GM12878 (cell line): ENCODE measurements at regions of chr12 and their contacts with region 1.

Region 1: GRCh38 chr12:121060149-121061001 is 21.3 kb upstream of the OASL start:
- DNase-seq: peak; percentile 56
- ATAC-seq: peak; percentile 96
- H3K4me3 ChIP-seq: peak overlapping the region; percentile 43
- H3K27ac ChIP-seq: peak overlapping the region; percentile 96
- H3K4me1 ChIP-seq: peaks cover 10% of the 10 kb centered on the region
- H3K27me3 ChIP-seq: no peaks in the 10 kb centered on the region
- CTCF ChIP-seq: peak; percentile 50 to 66 (median 56); a peak in 5 of 6 replicates
- EP300 ChIP-seq: no peak
- POLR2A ChIP-seq: peak; percentile 63
- RAD21 ChIP-seq: peak; percentile 69

Region 2: DNA sequence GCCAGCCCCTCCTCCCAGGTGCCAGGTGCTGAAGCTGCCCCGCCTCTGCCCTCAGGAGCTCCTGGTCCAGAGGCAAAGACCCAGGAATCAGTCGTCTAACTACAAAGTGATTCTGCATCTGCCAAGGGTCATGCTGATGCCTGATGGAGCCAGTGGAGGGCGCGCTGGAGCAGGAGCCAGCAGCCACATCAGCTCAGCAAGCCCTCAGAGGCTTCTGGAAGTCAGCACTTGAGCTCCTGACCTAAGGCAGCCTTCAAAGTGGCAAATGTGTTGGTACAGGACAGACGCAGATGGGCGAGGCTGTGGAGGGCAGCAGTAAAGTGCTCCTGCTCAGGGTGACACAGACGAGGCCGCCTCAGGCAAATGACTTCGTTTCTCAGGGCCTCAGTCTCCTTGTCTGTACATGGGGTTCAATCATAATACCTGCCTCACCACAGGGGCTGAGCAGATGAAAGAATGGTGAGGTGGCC is 55.0 kb before region 1 on chr12:
- CTCF ChIA-PET with region 1: interaction called, 28 read pairs
- POLR2A ChIA-PET with region 1: interaction called, 9 read pairs
- RAD21 ChIA-PET with region 1: interaction called, 24 read pairs
- SMC1A ChIA-PET with region 1: interaction called, 10 read pairs
- in situ Hi-C with region 1: no loop called
- intact Hi-C with region 1: no loop called
- DNase-seq: no peak
- ATAC-seq: peak; percentile 87
- H3K4me3 ChIP-seq: no peak overlapping the region
- H3K27ac ChIP-seq: no peak overlapping the region
- H3K4me1 ChIP-seq: no peaks in the 10 kb centered on the region
- H3K27me3 ChIP-seq: no peaks in the 10 kb centered on the region
- CTCF ChIP-seq: peak; percentile 63 to 77 (median 73)
- EP300 ChIP-seq: no peak
- POLR2A ChIP-seq: no peak
- RAD21 ChIP-seq: peak; percentile 53

Region 3: DNA sequence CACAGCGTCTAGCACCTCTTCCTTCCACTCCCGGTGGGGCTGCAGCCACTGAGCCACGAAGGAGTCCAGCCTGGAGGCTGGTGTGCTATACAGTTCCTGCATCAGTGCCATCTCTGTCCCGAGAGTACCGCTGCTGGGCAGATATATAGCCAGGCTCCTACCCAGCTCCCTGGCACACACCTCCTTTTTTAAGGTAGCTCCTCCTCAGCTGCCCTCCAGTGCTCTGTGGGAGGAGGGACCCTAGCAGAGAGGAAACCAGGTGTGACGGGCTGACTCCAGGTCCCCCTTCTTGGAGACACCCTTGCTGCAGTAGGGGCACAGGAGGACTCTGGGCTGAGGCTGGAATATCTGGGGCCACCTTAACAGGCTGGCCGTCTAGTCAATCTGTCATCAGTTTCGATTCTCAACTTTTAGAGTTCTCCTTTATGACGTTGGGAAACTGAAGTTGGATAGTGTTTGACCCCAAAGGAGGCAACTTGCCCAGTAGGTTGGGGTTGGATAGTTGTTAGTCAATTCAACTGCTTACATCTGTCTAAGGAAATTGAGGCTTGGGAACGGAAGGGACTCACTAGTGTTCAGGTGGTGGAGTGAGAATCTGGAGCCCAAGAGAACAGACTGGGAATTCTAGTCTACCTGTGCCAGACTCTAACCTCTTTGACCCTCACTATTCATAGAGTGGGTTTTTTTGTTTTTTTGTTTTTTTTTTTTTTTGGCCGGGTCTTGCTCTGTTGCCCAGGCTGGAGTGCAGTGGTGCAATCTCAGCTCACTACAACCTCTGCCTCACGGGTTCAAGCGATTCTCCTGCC is 21.3 kb before region 1 on chr12 and contains the start of gene OASL:
- CTCF ChIA-PET with region 1: interaction called, 18 read pairs
- POLR2A ChIA-PET with region 1: interaction called, 7 read pairs
- RAD21 ChIA-PET with region 1: interaction called, 6 read pairs
- SMC1A ChIA-PET with region 1: interaction called, 8 read pairs
- in situ Hi-C with region 1: no loop called
- intact Hi-C with region 1: no loop called
- DNase-seq: peak; percentile 63
- ATAC-seq: peak; percentile 94
- H3K4me3 ChIP-seq: peak within 1 kb of the TSS; percentile 70
- H3K27ac ChIP-seq: peak within 1 kb of the TSS; percentile 87
- H3K4me1 ChIP-seq: peaks cover 16% of the 10 kb centered on the region
- H3K27me3 ChIP-seq: no peaks in the 10 kb centered on the region
- CTCF ChIP-seq: no peak
- EP300 ChIP-seq: no peak
- POLR2A ChIP-seq: peak; percentile 90
- RAD21 ChIP-seq: no peak
- polyA plus RNA-seq, gene OASL: 2.5 to 2.7 TPM

Region 4: DNA sequence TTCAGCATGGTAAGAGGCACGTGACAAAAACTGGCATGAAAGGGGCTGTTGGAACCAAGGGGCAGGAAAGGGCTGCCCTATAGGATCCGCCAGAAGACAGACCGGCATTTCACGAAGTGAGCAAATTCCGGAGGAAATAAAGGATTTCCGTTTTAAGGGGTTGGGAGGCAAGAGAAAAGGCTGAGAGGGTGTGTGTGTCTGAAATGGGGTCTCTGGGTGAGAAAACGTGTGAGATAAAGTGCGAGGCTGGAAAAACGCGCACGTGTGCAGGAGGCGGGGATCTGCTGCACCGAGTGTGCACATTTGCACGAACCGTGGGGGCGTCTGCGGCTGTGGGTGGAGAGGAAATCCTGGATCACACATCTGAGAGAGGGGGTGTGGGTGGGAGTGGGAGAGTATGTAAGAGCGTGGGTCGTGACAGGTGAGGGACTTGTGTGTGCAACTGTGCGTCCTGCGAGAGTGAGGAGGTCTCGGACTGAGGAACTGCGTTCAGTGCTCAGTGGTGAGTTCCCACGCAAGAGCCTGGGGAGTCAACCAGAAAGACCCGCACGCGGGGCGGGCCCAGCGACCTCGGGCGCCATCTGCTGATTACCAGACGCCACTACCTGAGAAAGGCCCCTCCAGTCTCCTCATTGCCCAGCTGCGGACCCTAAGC is 35.3 kb after region 1 on chr12:
- CTCF ChIA-PET with region 1: interaction called, 80 read pairs
- POLR2A ChIA-PET with region 1: no interaction called
- RAD21 ChIA-PET with region 1: interaction called, 25 read pairs
- SMC1A ChIA-PET with region 1: interaction called, 17 read pairs
- in situ Hi-C with region 1: no loop called
- intact Hi-C with region 1: loop called (anchors 5 kb)
- DNase-seq: peak; percentile 21
- ATAC-seq: peak; percentile 97
- H3K4me3 ChIP-seq: no peak overlapping the region; the same call in 1 of the 2 replicates
- H3K27ac ChIP-seq: no peak overlapping the region
- H3K4me1 ChIP-seq: peaks cover 9% of the 10 kb centered on the region
- H3K27me3 ChIP-seq: no peaks in the 10 kb centered on the region
- CTCF ChIP-seq: peak; percentile 90 to 95 (median 92)
- EP300 ChIP-seq: no peak; a peak in 1 of 4 replicates
- POLR2A ChIP-seq: no peak
- RAD21 ChIP-seq: peak; percentile 71

Region 5: DNA sequence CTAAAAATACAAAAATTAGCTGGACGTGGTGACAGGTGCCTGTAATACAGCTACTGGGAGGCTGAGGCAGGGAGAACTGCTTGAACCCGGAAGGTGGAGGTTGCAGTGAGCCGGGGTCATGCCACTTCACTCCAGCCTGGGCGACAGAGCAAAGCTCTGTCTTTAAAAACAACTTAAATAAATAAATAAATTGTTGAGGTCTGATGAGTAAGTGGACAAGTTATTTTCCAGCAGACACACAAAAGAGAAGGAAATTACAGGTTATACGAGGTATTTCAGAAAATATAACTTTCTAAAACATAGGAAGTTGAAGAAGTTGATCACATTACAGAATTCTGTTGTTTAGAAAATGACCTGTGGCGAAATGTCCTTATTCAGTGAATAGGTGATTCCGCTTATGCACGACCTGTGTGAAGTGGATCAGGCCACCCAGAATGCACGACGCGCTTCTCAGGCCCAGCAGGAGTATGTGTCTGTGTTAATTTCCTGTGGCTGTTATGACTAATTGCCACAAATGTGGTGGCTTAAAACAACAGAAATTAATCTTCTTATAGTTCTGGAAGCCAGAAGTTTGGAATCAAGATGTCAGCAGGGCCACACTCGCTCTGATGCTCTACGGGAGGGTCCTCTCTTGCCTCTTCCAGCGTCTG is 110.4 kb after region 1 on chr12:
- CTCF ChIA-PET with region 1: no interaction called
- POLR2A ChIA-PET with region 1: no interaction called
- RAD21 ChIA-PET with region 1: no interaction called
- SMC1A ChIA-PET with region 1: no interaction called
- in situ Hi-C with region 1: no loop called
- intact Hi-C with region 1: no loop called
- DNase-seq: no peak
- ATAC-seq: no peak
- H3K4me3 ChIP-seq: no peak overlapping the region
- H3K27ac ChIP-seq: no peak overlapping the region
- H3K4me1 ChIP-seq: peaks cover 2% of the 10 kb centered on the region
- H3K27me3 ChIP-seq: no peaks in the 10 kb centered on the region
- CTCF ChIP-seq: no peak
- EP300 ChIP-seq: no peak
- POLR2A ChIP-seq: no peak
- RAD21 ChIP-seq: no peak

Region 6: GRCh38 chr12:121223292-121224285 is 163.2 kb after region 1 on chr12:
- CTCF ChIA-PET with region 1: interaction called, 32 read pairs
- POLR2A ChIA-PET with region 1: no interaction called
- RAD21 ChIA-PET with region 1: interaction called, 5 read pairs
- SMC1A ChIA-PET with region 1: interaction called, 4 read pairs
- in situ Hi-C with region 1: no loop called
- intact Hi-C with region 1: loop called (anchors 5 kb)
- DNase-seq: no peak
- ATAC-seq: peak; percentile 66
- H3K4me3 ChIP-seq: no peak overlapping the region
- H3K27ac ChIP-seq: no peak overlapping the region
- H3K4me1 ChIP-seq: peaks cover 16% of the 10 kb centered on the region
- H3K27me3 ChIP-seq: no peaks in the 10 kb centered on the region
- CTCF ChIP-seq: peak; percentile 40 to 64 (median 41); a peak in 5 of 6 replicates
- EP300 ChIP-seq: no peak
- POLR2A ChIP-seq: no peak
- RAD21 ChIP-seq: peak; percentile 40; the same call in 1 of the 2 replicates

Region 7: GRCh38 chr12:121230538-121230907 is 170.1 kb after region 1 on chr12:
- CTCF ChIA-PET with region 1: interaction called, 32 read pairs
- POLR2A ChIA-PET with region 1: no interaction called
- RAD21 ChIA-PET with region 1: interaction called, 5 read pairs
- SMC1A ChIA-PET with region 1: interaction called, 5 read pairs
- in situ Hi-C with region 1: no loop called
- intact Hi-C with region 1: loop called (anchors 5 kb)
- DNase-seq: no peak
- ATAC-seq: no peak
- H3K4me3 ChIP-seq: no peak overlapping the region
- H3K27ac ChIP-seq: no peak overlapping the region
- H3K4me1 ChIP-seq: peaks cover 13% of the 10 kb centered on the region
- H3K27me3 ChIP-seq: no peaks in the 10 kb centered on the region
- CTCF ChIP-seq: no peak
- EP300 ChIP-seq: no peak
- POLR2A ChIP-seq: no peak
- RAD21 ChIP-seq: no peak